BJ (cell line): ENCODE measurements at regions of chr12 and their contacts with region 1.

Region 1: GRCh38 chr12:2783936-2784600 is 10.7 kb upstream of the FKBP4 start:
- DNase-seq: no peak
- H3K4me3 ChIP-seq: no peak overlapping the region
- H3K27me3 ChIP-seq: peaks cover 22% of the 10 kb centered on the region
- CTCF ChIP-seq: peak; percentile 94

Region 2: GRCh38 chr12:2739817-2740641 is 44.0 kb before region 1 on chr12:
- CTCF ChIA-PET with region 1: interaction called, 31 read pairs
- POLR2A ChIA-PET with region 1: no interaction called
- DNase-seq: no peak
- H3K4me3 ChIP-seq: no peak overlapping the region
- H3K27me3 ChIP-seq: peaks cover 17% of the 10 kb centered on the region
- CTCF ChIP-seq: peak; percentile 70

Region 3: GRCh38 chr12:2764393-2764792 is 19.7 kb before region 1 on chr12:
- CTCF ChIA-PET with region 1: interaction called, 11 read pairs
- POLR2A ChIA-PET with region 1: no interaction called
- DNase-seq: no peak
- H3K4me3 ChIP-seq: no peak overlapping the region
- H3K27me3 ChIP-seq: peaks cover 18% of the 10 kb centered on the region
- CTCF ChIP-seq: no peak

Region 4: GRCh38 chr12:2773199-2773875 is 10.7 kb before region 1 on chr12:
- CTCF ChIA-PET with region 1: interaction called, 12 read pairs
- POLR2A ChIA-PET with region 1: no interaction called
- DNase-seq: no peak
- H3K4me3 ChIP-seq: no peak overlapping the region
- H3K27me3 ChIP-seq: peaks cover 26% of the 10 kb centered on the region
- CTCF ChIP-seq: no peak

Region 5: DNA sequence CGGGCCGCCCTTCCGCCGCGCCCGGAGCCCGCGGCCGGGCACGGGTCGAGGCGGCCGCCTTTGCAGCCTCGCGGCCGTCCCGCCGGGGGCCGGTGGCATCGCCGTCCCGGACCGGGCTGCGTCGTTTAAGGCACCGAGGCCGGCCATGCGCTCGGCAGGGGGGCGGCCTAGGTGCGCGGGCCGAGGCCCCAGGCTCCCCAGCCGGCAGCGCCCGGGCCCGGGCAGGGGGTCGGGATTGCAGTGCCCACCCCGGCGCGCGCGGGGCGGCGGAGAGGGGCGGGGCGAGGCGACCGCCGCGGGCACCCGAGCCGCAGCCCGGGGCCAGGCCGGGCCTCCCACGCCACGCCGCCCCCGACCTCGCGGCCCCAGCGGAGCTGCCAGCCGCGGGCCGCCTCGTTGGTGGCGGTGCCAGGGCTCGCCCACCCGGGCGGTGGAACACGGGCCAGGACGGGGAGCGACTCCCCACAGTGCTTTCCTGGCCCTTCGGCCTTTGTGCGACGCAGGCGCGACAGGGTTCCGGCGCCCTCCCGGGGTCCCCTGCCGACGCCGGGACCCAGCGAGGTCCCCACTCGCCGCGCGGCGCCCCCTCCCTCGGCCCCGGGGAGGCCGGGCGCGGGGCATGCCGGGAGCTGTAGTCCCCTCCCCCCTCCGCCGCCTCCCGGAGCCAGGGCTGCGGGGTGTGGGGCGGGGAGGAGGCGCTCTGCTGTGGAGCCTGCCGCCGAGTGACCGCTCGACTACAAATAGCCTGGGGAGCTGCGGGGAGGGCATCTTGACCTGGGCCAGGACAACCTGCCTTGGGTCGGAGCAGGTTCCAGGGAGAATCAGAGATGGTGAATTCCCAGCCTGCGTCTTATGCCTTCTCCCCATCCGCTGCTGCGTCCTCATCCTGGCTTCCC is 11.5 kb after region 1 on chr12:
- CTCF ChIA-PET with region 1: interaction called, 11 read pairs
- POLR2A ChIA-PET with region 1: no interaction called
- DNase-seq: no peak
- H3K4me3 ChIP-seq: peak overlapping the region; percentile 65
- H3K27me3 ChIP-seq: no peaks in the 10 kb centered on the region
- CTCF ChIP-seq: no peak

Region 6: DNA sequence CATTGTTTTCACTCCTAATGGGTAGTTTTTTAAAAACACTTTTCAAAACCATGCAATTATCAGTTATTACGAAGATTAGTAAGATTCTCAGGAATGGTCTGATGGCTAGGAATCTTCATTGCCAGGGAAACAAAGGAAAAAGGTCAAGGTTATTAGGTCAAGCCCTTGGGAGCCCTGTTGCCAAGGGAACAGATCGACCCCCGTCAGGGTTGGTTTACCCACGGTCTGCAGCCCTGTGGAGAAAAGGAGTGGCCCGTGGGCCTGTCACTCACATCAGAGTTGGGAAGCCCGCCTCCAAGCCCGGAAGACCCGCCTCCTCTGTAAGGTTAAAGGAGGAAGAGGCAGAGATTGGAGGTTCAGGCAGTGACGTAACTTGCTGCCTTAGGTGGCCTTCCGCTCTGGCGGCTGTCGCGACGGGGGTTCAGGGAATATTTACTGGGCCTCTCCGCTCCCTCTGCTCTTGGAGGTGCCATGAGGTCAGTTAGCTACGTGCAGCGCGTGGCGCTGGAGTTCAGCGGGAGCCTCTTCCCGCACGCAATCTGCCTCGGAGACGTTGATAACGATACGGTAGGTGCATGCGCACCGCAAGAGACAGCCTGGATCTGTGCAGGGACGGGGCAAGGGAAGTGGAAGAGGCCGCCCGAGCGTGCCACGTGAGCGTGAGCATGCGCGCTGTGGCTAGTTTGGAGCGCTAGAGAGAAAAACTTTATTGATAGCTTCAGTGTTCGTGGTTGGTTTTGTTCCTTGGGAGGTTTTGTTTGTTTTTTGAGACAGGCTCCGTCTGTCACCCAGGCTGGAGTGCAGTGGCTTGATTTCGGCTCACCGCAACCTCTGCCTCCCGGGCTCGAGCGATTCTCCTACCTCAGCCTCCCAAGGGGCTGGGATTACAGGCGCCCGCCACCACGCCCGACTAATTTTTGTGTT is 28.5 kb after region 1 on chr12 and contains the start of gene ITFG2:
- CTCF ChIA-PET with region 1: interaction called, 12 read pairs
- POLR2A ChIA-PET with region 1: no interaction called
- DNase-seq: peak; percentile 90
- H3K4me3 ChIP-seq: peak within 1 kb of the TSS; percentile 86
- H3K27me3 ChIP-seq: no peaks in the 10 kb centered on the region
- CTCF ChIP-seq: no peak
- polyA plus RNA-seq, gene ITFG2: 21.9 and 27.6 TPM in 2 replicates